ENCODE measurements at regions of chr3 and their contacts with region 1.

Region 1: GRCh38 chr3:142447852-142448823 is at the start of gene XRN1:
- DNase-seq: peak; percentile 94
- H3K4me3 Mint-ChIP-seq: peak within 1 kb of the TSS; percentile 99
- H3K27ac Mint-ChIP-seq: peak within 1 kb of the TSS; percentile 99
- H3K4me1 Mint-ChIP-seq: peaks cover 44% of the 10 kb centered on the region
- H3K27me3 Mint-ChIP-seq: no peaks in the 10 kb centered on the region
- total RNA-seq, gene XRN1: 48.0 and 52.7 TPM in 2 replicates

Region 2: DNA sequence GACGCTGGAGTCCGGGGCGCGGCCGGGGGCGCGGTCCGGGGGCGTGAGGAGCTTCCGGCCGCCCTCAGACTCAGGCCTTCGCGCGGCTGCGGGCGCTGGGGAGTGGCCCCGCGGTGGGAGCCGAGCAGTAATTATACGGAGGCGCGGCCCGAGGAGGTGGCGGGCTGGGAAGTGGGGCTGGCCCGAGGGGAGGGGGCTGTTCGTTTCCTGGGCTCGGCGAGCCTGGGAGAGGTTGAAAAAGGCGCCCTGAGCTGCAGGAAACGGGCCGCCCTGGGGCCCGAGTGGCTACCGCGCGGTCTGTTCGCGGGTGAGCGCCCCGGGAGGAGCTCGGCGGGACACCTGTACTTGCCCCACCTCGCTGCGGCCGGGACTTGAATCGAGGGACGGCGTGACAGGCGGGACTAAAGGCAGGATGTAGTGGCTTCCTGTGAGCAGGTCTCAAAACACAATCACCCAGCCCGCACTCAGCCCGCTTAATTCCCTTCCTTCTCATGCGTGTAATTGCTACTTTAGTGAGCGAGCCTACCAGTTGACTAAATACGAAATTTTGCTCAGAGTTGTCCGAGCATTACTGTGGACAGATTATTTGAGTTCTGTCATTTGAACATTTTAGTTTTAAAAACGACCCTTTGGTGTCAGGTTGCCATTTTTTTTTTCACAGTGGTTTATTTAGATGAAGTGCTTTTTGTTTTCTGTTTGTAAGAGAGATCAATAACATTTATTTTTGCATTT is 960.5 kb before region 1 on chr3:
- intact Hi-C with region 1: loop called (anchors 5 kb)
- DNase-seq: peak; percentile 85
- H3K4me3 Mint-ChIP-seq: peak overlapping the region; percentile 93
- H3K27ac Mint-ChIP-seq: peak overlapping the region; percentile 93
- H3K4me1 Mint-ChIP-seq: peaks cover 66% of the 10 kb centered on the region
- H3K27me3 Mint-ChIP-seq: peaks cover 2% of the 10 kb centered on the region

Region 3: GRCh38 chr3:141875374-141875892 is 572.7 kb before region 1 on chr3:
- intact Hi-C with region 1: loop called (anchors 1 kb)
- DNase-seq: peak; percentile 78
- H3K4me3 Mint-ChIP-seq: peak overlapping the region; percentile 92
- H3K27ac Mint-ChIP-seq: peak overlapping the region; percentile 90
- H3K4me1 Mint-ChIP-seq: peaks cover 30% of the 10 kb centered on the region
- H3K27me3 Mint-ChIP-seq: peaks cover 2% of the 10 kb centered on the region

Region 4: DNA sequence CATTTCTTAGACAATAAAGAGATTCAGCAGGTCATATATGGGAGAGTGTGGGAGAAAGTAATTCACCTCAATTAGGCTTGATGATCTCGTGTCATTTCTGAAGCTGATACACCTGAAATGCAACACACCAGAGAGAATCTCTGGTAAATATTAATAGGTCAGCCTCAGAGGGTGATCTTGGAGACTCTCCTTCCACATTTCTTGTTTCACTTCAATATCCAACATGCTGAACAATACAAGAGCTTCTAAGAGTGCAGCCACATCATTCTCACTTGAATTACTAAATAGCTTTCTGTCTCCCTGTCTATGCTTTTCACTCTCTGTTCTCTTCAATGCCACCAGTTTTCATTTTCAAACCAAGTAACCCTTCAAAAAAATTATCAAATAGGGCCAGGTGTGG is 151.6 kb before region 1 on chr3:
- intact Hi-C with region 1: no loop called
- DNase-seq: no peak
- H3K4me3 Mint-ChIP-seq: no peak overlapping the region
- H3K27ac Mint-ChIP-seq: no peak overlapping the region
- H3K4me1 Mint-ChIP-seq: no peaks in the 10 kb centered on the region
- H3K27me3 Mint-ChIP-seq: no peaks in the 10 kb centered on the region

Region 5: DNA sequence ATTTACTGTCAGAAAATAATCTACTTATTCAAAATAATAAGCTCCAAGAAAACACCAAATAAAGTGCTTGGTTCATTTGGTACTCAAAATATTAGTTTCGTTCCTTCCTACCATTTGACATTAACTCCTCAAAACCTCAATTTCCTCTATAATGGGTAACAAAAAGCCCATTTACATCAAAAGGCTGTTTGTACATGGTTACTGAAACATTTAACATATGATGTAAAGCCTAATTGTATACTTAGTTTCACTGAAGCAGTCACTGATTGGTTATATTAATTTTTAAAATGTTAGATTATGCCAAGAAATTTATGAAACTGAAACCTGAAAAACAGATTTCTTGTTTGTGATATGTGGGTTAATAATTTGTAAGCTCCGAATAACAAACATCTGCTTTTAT is 15.0 kb before region 1 on chr3:
- intact Hi-C with region 1: loop called (anchors 2 kb)
- DNase-seq: no peak
- H3K4me3 Mint-ChIP-seq: no peak overlapping the region
- H3K27ac Mint-ChIP-seq: no peak overlapping the region
- H3K4me1 Mint-ChIP-seq: peaks cover 33% of the 10 kb centered on the region
- H3K27me3 Mint-ChIP-seq: no peaks in the 10 kb centered on the region

Region 6: GRCh38 chr3:142595951-142596725 is 148.0 kb after region 1 on chr3 and contains the start of gene PLS1:
- intact Hi-C with region 1: loop called (anchors 1 kb)
- DNase-seq: peak; percentile 89
- H3K4me3 Mint-ChIP-seq: peak within 1 kb of the TSS; percentile 95
- H3K27ac Mint-ChIP-seq: peak within 1 kb of the TSS; percentile 69
- H3K4me1 Mint-ChIP-seq: peaks cover 25% of the 10 kb centered on the region
- H3K27me3 Mint-ChIP-seq: peaks cover 4% of the 10 kb centered on the region
- total RNA-seq, gene PLS1: 4.4 and 4.8 TPM in 2 replicates

Region 7: DNA sequence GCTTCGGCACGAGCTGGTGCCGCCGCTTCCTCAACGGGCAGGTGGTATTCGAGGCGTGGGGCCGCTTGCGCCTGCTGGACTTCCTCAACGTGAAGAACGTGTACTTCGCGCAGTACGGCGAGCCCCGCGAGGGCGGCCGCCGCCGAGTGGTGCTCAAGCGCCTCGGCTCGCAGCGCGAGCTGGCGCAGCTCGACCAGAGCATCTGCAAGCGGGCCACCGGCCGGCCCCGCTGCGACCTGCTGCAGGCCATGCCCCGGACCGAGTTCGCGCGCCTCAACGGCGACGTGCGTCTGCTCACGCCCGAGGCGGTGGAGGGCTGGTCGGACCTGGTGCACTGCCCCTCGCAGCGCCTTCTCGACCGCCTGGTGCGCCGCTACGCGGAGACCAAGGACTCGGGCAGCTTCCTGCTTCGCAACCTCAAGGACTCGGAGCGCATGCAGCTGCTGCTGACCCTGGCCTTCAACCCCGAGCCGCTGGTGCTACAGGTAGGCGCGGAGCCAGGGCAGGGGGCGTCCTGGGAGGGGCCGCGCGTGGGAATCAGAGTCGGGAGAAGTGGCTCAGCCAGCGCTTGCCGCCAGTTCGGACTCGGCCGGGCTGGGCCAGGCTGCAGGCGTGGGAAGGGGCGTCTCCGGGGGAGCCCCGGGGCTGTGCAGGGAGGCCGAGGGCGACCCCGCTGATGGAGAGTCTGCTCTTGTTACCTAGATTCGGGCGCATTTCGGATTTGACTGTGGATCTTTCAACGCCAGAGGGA is 1524.5 kb after region 1 on chr3:
- intact Hi-C with region 1: loop called (anchors 5 kb)
- DNase-seq: peak; percentile 66
- H3K4me3 Mint-ChIP-seq: peak overlapping the region; percentile 88
- H3K27ac Mint-ChIP-seq: peak overlapping the region; percentile 89
- H3K4me1 Mint-ChIP-seq: peaks cover 33% of the 10 kb centered on the region
- H3K27me3 Mint-ChIP-seq: peaks cover 20% of the 10 kb centered on the region